ENCODE measurements at regions of chr19 and their contacts with region 1.

Region 1: DNA sequence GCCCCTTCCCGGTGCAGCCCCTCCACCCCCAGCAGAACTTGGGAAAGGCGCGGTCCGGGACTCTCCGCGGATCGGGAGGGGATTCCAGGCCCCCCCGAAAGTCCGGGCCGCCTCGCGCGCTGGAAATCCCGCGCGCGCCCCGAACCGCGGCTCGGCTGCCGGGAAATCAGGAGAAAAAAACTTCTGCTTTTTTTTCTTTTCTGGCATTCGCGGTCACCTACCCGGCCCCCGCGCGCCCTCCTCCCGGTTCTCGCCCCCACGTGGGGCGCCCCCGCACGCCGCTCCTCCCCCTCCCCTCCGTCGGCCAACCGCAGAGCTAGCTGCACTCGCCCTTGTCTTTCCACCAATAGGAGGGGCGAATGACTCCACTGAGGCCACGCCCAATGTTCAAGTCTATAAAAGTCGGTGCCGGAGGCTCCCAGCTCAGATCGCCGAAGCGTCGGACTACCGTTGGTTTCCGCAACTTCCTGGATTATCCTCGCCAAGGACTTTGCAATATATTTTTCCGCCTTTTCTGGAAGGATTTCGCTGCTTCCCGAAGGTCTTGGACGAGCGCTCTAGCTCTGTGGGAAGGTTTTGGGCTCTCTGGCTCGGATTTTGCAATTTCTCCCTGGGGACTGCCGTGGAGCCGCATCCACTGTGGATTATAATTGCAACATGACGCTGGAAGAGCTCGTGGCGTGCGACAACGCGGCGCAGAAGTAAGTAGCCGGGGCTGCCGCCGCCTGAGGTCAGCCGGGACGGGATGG is at the start of gene GADD45B:
- DNase-seq: peak; percentile 96 to 98 (median 96)
- H3K4me3 ChIP-seq: peak within 1 kb of the TSS; percentile 71 to 97
- H3K4me3 Mint-ChIP-seq: peak within 1 kb of the TSS; percentile 99 to 100 (median 100)
- H3K27ac ChIP-seq: peak within 1 kb of the TSS; percentile 76
- H3K27ac Mint-ChIP-seq: peak within 1 kb of the TSS; percentile 95 to 99 (median 97)
- H3K4me1 ChIP-seq: peaks cover 25% of the 10 kb centered on the region
- H3K4me1 Mint-ChIP-seq: peaks cover 6 to 36% (median 14%) of the 10 kb centered on the region in 4 donors
- H3K27me3 ChIP-seq: no peaks in the 10 kb centered on the region
- H3K27me3 Mint-ChIP-seq: no peaks in the 10 kb centered on the region
- total RNA-seq, gene GADD45B: 88.2 to 88.3 TPM

Region 2: DNA sequence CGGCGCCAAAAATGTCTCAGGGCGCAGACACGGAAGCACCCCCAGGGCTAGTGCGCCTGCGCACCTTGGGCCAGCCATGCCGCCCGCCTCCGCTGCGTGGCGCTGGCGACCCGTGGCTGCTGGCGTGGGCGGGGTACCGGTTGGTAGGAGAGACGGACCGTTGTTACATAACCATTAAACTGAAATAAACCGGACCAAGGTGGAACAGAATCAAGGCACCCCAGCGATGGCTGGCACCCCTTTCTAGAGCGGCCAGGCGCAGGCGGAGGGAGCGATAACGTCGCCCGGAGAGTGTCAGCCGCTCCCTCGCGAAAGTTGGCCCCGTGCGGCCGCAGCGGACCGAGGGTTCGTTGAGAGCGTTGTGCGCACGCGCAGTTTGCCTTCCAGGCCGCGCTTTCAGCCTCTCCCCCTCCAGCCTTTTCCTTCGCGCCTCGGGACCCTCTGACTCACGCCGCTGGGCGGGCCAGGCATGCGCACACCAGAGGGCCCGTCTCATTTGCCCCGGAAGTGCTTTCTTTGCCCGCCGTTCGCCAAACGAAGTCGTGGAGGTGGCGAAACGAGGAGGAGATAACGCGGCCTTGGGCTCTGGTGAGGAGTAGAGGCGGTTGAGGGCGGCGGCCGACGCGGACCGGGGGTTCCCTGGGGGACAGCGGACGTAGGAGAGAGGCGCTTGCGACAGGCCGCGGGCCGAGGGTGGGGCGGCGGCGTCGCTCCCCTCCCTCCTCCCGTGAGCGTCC is 239.4 kb before region 1 on chr19 and contains the starts of genes PLEKHJ1 and SF3A2:
- CTCF ChIA-PET with region 1: no interaction called
- POLR2A ChIA-PET with region 1: interaction called, 9 read pairs
- intact Hi-C with region 1: loop called (anchors 5 kb)
- DNase-seq: peak; percentile 98 to 100 (median 99)
- H3K4me3 ChIP-seq: peak within 1 kb of the TSS; percentile 38 to 88
- H3K4me3 Mint-ChIP-seq: peak within 1 kb of the TSS; percentile 95 to 100 (median 98)
- H3K27ac ChIP-seq: peak within 1 kb of the TSS; percentile 98
- H3K27ac Mint-ChIP-seq: peak within 1 kb of the TSS; percentile 97 to 100 (median 99)
- H3K4me1 ChIP-seq: peaks cover 62% of the 10 kb centered on the region
- H3K4me1 Mint-ChIP-seq: peaks cover 39 to 67% (median 54%) of the 10 kb centered on the region in 4 donors
- H3K27me3 ChIP-seq: no peaks in the 10 kb centered on the region
- H3K27me3 Mint-ChIP-seq: peaks cover 2 to 5% of the 10 kb centered on the region in 2 donors
- total RNA-seq, gene PLEKHJ1: 64.9 to 65.3 TPM
- total RNA-seq, gene SF3A2: 140 to 141 TPM

Region 3: GRCh38 chr19:2438178-2438864 is 37.6 kb before region 1 on chr19:
- CTCF ChIA-PET with region 1: no interaction called
- POLR2A ChIA-PET with region 1: no interaction called
- intact Hi-C with region 1: no loop called
- DNase-seq: no peak
- H3K4me3 ChIP-seq: no peak overlapping the region
- H3K4me3 Mint-ChIP-seq: no peak overlapping the region
- H3K27ac ChIP-seq: no peak overlapping the region
- H3K27ac Mint-ChIP-seq: no peak overlapping the region
- H3K4me1 ChIP-seq: no peaks in the 10 kb centered on the region
- H3K4me1 Mint-ChIP-seq: peaks cover 0 to 7% (median 4%) of the 10 kb centered on the region in 4 donors
- H3K27me3 ChIP-seq: no peaks in the 10 kb centered on the region
- H3K27me3 Mint-ChIP-seq: no peaks in the 10 kb centered on the region

Region 4: GRCh38 chr19:2461751-2462634 is 13.9 kb before region 1 on chr19:
- CTCF ChIA-PET with region 1: interaction called, 4 read pairs
- POLR2A ChIA-PET with region 1: interaction called, 45 read pairs
- intact Hi-C with region 1: loop called (anchors 2 kb)
- DNase-seq: peak; percentile 31 to 43 (median 36)
- H3K4me3 ChIP-seq: peak overlapping the region in 1 of 2 donors; percentile 67
- H3K4me3 Mint-ChIP-seq: peak overlapping the region; percentile 71 to 86 (median 80)
- H3K27ac ChIP-seq: peak overlapping the region; percentile 41
- H3K27ac Mint-ChIP-seq: peak overlapping the region in 3 of 7 donors; percentile 29 to 76 (median 50)
- H3K4me1 ChIP-seq: peaks cover 10% of the 10 kb centered on the region
- H3K4me1 Mint-ChIP-seq: peaks cover 3 to 12% (median 10%) of the 10 kb centered on the region in 4 donors
- H3K27me3 ChIP-seq: no peaks in the 10 kb centered on the region
- H3K27me3 Mint-ChIP-seq: no peaks in the 10 kb centered on the region

Region 5: DNA sequence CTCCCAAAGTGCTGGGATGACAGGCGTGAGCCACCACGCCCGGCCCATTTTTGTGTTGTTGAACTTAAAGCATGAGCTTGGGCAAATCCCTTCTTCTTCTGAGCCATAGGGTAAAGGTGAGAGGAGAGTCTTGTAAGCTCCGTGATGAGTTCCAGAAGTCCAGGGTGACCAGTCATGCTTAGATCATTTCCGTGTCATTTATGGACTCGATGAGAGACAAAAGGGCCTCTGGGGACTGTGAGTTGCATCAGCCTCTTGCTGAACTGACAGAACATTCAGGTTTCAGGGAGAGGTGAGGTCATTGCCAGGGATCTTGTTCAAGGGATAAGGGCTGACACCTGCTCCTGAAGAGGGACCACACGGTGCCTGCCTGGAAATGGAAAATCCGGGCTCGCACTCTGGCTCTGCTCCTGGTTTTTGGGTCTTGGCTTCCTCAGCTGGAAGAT is 53.6 kb after region 1 on chr19:
- CTCF ChIA-PET with region 1: interaction called, 3 read pairs
- POLR2A ChIA-PET with region 1: interaction called, 26 read pairs
- intact Hi-C with region 1: no loop called
- DNase-seq: no peak
- H3K4me3 ChIP-seq: no peak overlapping the region
- H3K4me3 Mint-ChIP-seq: no peak overlapping the region
- H3K27ac ChIP-seq: no peak overlapping the region
- H3K27ac Mint-ChIP-seq: no peak overlapping the region
- H3K4me1 ChIP-seq: peaks cover 14% of the 10 kb centered on the region
- H3K4me1 Mint-ChIP-seq: peaks cover 10 to 17% (median 12%) of the 10 kb centered on the region in 4 donors
- H3K27me3 ChIP-seq: no peaks in the 10 kb centered on the region
- H3K27me3 Mint-ChIP-seq: no peaks in the 10 kb centered on the region

Region 6: DNA sequence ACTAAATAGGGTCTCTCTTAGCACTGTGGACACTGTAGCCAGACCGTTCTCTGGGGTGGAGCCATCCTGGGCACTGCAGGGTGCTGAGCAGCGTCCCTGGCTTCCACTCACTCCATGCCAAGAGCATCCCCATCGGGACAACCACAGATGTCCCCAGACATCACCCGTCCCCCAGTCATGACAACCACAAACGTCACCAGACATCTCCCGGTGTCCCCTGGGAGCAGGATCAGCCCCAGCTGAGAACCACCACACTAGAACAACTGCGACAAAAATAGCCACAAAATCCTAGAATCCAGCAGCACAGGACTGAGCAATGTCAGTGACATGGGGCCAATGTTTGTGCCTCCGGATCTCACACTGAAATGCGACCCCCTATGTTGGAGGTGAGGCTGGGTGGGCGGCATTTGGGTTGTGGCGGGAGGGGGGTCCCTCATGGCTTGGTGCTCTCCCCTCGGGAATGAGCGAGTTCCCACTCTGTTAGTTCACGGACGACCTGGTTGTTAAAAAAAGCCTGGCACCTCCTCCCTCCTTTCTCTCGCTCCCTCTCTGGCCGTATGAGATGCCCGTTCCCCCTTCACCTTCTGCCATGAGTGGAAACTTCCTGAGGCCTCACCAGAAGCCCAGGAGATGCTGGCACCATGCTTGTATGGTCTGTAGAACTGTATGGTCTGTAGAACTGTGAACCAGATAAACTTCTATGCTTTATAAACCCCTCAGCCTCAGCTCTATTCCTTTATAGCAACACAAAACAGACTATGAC is 93.9 kb after region 1 on chr19:
- CTCF ChIA-PET with region 1: interaction called, 4 read pairs
- POLR2A ChIA-PET with region 1: interaction called, 10 read pairs
- intact Hi-C with region 1: no loop called
- DNase-seq: no peak
- H3K4me3 ChIP-seq: no peak overlapping the region
- H3K4me3 Mint-ChIP-seq: no peak overlapping the region
- H3K27ac ChIP-seq: no peak overlapping the region
- H3K27ac Mint-ChIP-seq: no peak overlapping the region
- H3K4me1 ChIP-seq: peaks cover 8% of the 10 kb centered on the region
- H3K4me1 Mint-ChIP-seq: peaks cover 2 to 18% (median 8%) of the 10 kb centered on the region in 4 donors
- H3K27me3 ChIP-seq: no peaks in the 10 kb centered on the region
- H3K27me3 Mint-ChIP-seq: no peaks in the 10 kb centered on the region

Region 7: DNA sequence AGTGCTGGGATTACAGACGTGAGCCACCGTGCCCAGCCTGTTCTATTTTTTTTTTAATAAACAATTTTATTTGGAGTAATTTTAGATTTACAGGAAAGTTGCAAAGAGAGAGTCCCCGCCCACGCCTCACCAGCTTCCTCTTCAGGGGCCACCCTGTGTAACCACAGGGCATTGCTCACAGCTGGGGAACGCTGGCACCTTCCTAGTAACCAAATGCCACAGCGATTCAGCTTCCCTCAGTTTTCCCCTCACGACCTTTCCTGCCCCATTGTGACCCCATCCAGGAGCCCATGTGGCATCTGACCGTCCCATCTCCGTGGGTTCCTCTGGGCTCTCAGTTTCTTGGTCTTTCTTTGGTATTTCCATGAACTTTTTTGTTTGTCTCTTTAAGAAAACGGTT is 142.7 kb after region 1 on chr19:
- CTCF ChIA-PET with region 1: interaction called, 123 read pairs
- POLR2A ChIA-PET with region 1: interaction called, 258 read pairs
- intact Hi-C with region 1: no loop called
- DNase-seq: peak; percentile 51 to 84 (median 59)
- H3K4me3 ChIP-seq: peak overlapping the region; percentile 8 to 29
- H3K4me3 Mint-ChIP-seq: peak overlapping the region; percentile 66 to 90 (median 80)
- H3K27ac ChIP-seq: peak overlapping the region; percentile 57
- H3K27ac Mint-ChIP-seq: peak overlapping the region; percentile 89 to 96 (median 93)
- H3K4me1 ChIP-seq: peaks cover 70% of the 10 kb centered on the region
- H3K4me1 Mint-ChIP-seq: peaks cover 40 to 69% (median 54%) of the 10 kb centered on the region in 4 donors
- H3K27me3 ChIP-seq: no peaks in the 10 kb centered on the region
- H3K27me3 Mint-ChIP-seq: no peaks in the 10 kb centered on the region